MCF 10A (cell line): ENCODE measurements at regions of chr5 and their contacts with region 1.

Region 1: DNA sequence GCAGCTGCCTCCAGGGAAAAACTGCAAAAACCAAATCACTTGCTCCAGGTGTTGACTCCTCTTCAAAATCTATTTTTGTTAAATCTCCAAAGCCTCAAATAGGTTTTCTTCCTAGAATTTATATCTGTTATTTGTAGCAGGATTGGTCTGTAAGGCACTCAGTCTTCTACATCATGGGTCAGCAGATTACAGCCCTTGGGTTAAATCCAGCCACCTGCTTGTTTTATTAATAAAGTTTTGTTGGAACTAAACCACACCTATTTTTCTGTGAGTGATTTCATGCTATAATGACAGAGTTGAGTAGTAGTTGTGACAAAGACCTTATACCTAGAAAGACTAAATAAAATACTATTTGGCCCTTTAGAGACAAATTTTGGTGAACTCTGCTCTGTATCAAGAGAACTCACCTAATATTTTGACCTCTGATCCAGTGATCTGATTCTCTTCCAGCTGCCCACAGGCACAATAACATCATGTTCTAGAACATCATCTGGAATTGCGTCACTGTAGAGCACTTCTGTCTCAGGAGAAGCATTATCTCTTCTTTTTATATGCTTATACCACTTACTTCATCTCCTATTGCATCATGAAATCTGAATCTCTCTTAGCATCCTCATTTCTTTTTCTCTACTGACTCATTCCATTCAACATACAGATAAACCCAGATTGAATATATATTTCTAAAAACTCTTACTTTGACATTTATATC is 130.1 kb downstream of the RPS23 start:
- DNase-seq: peak; percentile 84
- H3K4me3 Mint-ChIP-seq: peak overlapping the region; percentile 4
- H3K27ac Mint-ChIP-seq: peak overlapping the region; percentile 93
- H3K4me1 Mint-ChIP-seq: peaks cover 47% of the 10 kb centered on the region
- H3K27me3 Mint-ChIP-seq: no peaks in the 10 kb centered on the region
- CTCF ChIP-seq: no peak

Region 2: GRCh38 chr5:82158755-82159413 is 10.9 kb after region 1 on chr5:
- CTCF ChIA-PET with region 1: interaction called, 10 read pairs
- POLR2A ChIA-PET with region 1: interaction called, 60 read pairs
- intact Hi-C with region 1: no loop called
- DNase-seq: peak; percentile 86
- H3K4me3 Mint-ChIP-seq: no peak overlapping the region
- H3K27ac Mint-ChIP-seq: peak overlapping the region; percentile 70
- H3K4me1 Mint-ChIP-seq: peaks cover 21% of the 10 kb centered on the region
- H3K27me3 Mint-ChIP-seq: no peaks in the 10 kb centered on the region
- CTCF ChIP-seq: no peak

Region 3: GRCh38 chr5:82176115-82176814 is 28.2 kb after region 1 on chr5:
- CTCF ChIA-PET with region 1: no interaction called
- POLR2A ChIA-PET with region 1: no interaction called
- intact Hi-C with region 1: no loop called
- DNase-seq: no peak
- H3K4me3 Mint-ChIP-seq: no peak overlapping the region
- H3K27ac Mint-ChIP-seq: no peak overlapping the region
- H3K4me1 Mint-ChIP-seq: no peaks in the 10 kb centered on the region
- H3K27me3 Mint-ChIP-seq: no peaks in the 10 kb centered on the region
- CTCF ChIP-seq: no peak

Region 4: GRCh38 chr5:82332064-82332855 is 184.2 kb after region 1 on chr5:
- CTCF ChIA-PET with region 1: no interaction called
- POLR2A ChIA-PET with region 1: no interaction called
- intact Hi-C with region 1: no loop called
- DNase-seq: no peak
- H3K4me3 Mint-ChIP-seq: no peak overlapping the region
- H3K27ac Mint-ChIP-seq: no peak overlapping the region
- H3K4me1 Mint-ChIP-seq: no peaks in the 10 kb centered on the region
- H3K27me3 Mint-ChIP-seq: no peaks in the 10 kb centered on the region
- CTCF ChIP-seq: no peak